Right ventricle myocardium inferior (tissue), 1 donor: ENCODE measurements at regions of chr15 and their contacts with region 1.

Region 1: GRCh38 chr15:50675536-50676144 is 11.0 kb downstream of the TRPM7 start:
- DNase-seq: no peak
- ATAC-seq: no peak

Region 2: GRCh38 chr15:50712018-50712417 is 36.4 kb after region 1 on chr15:
- intact Hi-C with region 1: loop called (anchors 5 kb)
- DNase-seq: no peak
- ATAC-seq: no peak

Region 3: GRCh38 chr15:50876989-50877360 is 201.3 kb after region 1 on chr15:
- intact Hi-C with region 1: loop called (anchors 1 kb)
- DNase-seq: no peak
- ATAC-seq: peak; percentile 75

Region 4: DNA sequence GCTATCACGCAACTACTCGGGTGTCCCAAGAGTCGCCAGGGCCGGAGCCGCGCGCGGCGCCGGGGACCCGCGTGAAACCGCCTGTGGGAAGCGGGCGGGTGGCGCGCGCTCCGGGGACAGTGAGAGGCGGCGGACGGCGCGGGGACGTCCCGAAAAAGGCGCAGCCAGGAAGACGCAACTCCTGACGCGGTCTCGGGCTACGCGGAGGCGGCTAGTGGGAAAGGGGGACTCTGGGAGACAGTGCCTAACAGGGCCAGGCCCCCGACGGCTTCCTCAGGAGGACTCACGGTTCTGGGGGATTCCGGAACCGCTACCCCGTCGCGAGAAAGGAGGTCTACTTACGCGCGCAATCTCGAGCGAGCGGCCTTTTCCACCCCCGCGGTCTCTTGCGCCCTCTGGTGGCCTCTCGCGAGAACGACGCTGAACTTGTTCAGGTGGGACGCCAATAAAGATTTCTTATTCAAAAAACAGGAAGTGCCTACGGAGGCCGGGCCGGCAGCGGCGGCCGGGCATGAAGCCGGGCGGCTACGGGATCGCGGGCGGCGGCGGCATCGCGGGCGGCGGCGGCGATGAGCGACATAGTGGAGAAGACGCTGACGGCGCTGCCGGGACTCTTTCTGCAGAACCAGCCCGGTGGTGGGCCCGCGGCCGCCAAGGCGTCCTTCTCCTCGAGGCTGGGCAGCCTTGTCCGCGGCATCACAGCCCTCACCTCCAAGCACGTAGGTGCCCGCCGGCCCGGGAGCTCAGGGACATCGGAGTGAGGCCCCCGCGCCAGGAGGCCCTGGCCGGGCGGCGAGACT is 232.8 kb after region 1 on chr15 and contains the start of gene AP4E1:
- intact Hi-C with region 1: loop called (anchors 10 kb)
- DNase-seq: peak; percentile 96
- ATAC-seq: peak; percentile 88
- total RNA-seq, gene AP4E1: 6.4 TPM